GM12878 (cell line): ENCODE measurements at regions of chr11 and their contacts with region 1.

Region 1: DNA sequence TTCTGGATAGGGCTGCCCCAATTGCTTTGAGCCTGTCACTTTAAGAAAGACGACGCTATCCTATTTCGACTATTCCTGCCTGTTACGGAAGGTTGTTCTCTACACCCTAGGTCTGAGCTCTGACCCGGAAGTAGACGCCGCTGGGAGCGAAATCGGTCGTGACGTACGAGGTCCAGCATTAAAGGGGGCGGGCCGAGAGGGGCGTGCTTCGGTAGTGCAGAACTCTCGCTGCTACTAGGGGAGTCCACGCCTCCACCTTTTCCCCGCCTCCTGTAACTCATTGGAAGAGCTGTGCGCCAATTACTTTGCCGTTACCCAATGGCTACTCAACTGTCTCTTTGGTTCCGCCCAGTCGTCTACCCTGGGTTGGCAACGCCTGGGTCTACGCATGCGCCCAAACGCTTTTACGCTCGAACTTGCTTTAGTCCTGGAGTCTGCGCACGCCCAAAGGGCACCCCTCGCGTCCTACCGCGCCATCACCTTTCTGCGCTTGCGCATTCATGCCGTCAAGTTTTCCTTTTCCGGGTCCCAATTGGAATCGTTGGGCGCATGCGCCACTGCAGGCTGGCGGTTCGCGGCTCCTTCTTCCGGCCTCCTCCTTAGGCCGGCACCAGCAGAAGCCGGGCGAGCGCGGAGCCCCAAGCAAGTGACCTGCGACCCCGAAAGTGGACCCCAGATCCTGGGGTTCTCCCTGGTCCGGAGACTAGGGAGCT is at the start of gene PCNX3:
- DNase-seq: peak; percentile 100
- ATAC-seq: peak; percentile 86
- H3K4me3 ChIP-seq: peak within 1 kb of the TSS; percentile 100
- H3K27ac ChIP-seq: peak within 1 kb of the TSS; percentile 91
- H3K4me1 ChIP-seq: peaks cover 24% of the 10 kb centered on the region
- H3K27me3 ChIP-seq: no peaks in the 10 kb centered on the region
- CTCF ChIP-seq: no peak
- EP300 ChIP-seq: peak in 1 of 2 experiments; percentile 57; a peak in 2 of 4 replicates
- POLR2A ChIP-seq: peak; percentile 64
- RAD21 ChIP-seq: no peak
- polyA plus RNA-seq, gene PCNX3: 0.03 to 0.15 TPM

Region 2: DNA sequence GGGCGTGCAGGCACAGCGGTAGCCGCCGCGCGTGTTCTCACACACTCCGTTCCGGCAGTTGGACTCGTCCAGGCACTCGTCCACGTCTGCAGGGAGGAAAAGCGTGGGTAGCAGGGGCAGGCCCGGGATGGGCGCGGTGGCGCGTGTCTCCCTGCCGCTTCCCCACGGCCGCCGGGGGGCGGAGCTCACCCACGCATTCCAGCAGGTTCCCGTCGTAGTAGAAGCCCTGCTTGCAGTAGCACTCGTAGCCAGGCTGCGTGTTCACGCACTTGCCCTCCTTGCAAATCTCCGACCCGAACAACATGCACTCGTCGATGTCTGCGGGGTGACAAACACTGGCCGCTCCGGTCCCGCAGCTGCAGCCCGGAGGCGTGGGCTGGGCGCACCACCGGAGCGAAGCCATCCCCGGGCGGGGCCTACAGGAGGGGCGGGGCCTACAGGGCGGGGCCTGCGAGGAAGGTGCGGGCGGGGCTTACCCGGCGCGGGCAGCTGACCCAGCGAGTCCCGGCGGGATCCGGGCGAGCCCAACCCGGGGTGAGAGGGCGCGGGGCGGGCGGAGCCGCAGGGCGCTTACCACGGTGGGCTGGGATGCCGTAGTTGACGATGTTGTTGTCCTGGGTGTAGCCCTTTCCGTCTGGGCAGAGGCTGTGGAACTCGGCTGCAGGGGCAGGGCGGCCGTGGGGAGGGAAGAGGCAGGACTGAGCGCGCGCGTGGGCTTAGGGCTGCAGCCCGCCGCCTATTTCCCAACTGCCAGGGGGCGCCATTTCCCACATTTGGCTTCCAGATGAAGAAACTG is 74.9 kb before region 1 on chr11:
- CTCF ChIA-PET with region 1: interaction called, 11 read pairs
- POLR2A ChIA-PET with region 1: interaction called, 14 read pairs
- RAD21 ChIA-PET with region 1: interaction called, 12 read pairs
- SMC1A ChIA-PET with region 1: interaction called, 21 read pairs
- in situ Hi-C with region 1: no loop called
- intact Hi-C with region 1: loop called (anchors 2 kb)
- DNase-seq: peak; percentile 71
- ATAC-seq: peak; percentile 95
- H3K4me3 ChIP-seq: peak overlapping the region; percentile 72
- H3K27ac ChIP-seq: peak overlapping the region; percentile 61
- H3K4me1 ChIP-seq: peaks cover 6% of the 10 kb centered on the region
- H3K27me3 ChIP-seq: no peaks in the 10 kb centered on the region
- CTCF ChIP-seq: peak; percentile 82 to 91 (median 82)
- EP300 ChIP-seq: no peak
- POLR2A ChIP-seq: peak; percentile 81
- RAD21 ChIP-seq: peak; percentile 74

Region 3: GRCh38 chr11:65575568-65576231 is 39.7 kb before region 1 on chr11 and contains the start of gene EHBP1L1:
- CTCF ChIA-PET with region 1: interaction called, 25 read pairs
- POLR2A ChIA-PET with region 1: interaction called, 34 read pairs
- RAD21 ChIA-PET with region 1: interaction called, 36 read pairs
- SMC1A ChIA-PET with region 1: interaction called, 6 read pairs
- in situ Hi-C with region 1: no loop called
- intact Hi-C with region 1: loop called (anchors 1 kb)
- DNase-seq: peak; percentile 70
- ATAC-seq: peak; percentile 27
- H3K4me3 ChIP-seq: peak within 1 kb of the TSS; percentile 97
- H3K27ac ChIP-seq: peak within 1 kb of the TSS; percentile 96
- H3K4me1 ChIP-seq: peaks cover 35% of the 10 kb centered on the region
- H3K27me3 ChIP-seq: no peaks in the 10 kb centered on the region
- CTCF ChIP-seq: no peak
- EP300 ChIP-seq: peak in 1 of 2 experiments; percentile 52; a peak in 1 of 4 replicates
- POLR2A ChIP-seq: peak; percentile 76
- RAD21 ChIP-seq: no peak
- polyA plus RNA-seq, gene EHBP1L1: 0.06 to 0.09 TPM

Region 4: DNA sequence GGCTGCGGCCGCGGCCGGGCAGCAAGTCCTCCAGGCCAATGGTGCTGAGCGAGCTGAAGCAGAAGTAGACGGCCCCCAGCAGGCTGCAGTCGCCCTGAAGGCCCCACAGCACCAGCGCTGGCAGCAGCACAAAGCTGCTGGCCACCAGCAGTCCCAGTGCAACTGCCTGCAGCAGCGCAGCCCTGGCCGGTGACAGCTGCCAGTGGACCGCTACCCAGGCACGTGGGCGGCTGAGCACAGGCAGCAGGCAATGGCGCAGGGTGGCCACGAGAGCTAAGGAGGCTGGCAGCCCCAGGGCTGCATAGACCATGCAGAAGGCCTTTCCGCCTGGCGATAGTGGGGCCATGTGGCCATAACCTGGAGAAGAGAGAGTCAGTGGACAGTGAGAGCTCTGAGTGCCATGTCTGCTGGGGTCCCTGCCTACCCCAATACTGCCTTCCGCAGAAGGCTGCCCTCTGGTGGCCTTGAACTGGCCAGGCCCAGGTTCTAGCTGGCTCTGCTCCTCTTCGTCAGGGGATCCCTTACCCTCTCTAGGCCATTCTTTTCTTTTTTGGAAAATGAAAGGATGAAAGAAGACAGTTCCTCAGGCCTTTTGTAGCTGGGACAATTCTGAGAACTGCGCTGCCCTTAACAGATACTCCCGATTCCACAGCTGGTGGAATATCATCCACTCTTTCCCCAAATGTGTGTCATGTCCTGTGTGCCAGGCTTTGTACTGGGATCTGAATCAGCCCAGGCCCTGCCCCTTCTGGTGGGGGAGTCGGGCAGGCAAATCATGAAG is 21.7 kb before region 1 on chr11:
- CTCF ChIA-PET with region 1: interaction called, 35 read pairs
- POLR2A ChIA-PET with region 1: interaction called, 12 read pairs
- RAD21 ChIA-PET with region 1: interaction called, 17 read pairs
- SMC1A ChIA-PET with region 1: interaction called, 21 read pairs
- in situ Hi-C with region 1: no loop called
- intact Hi-C with region 1: loop called (anchors 1 kb)
- DNase-seq: no peak
- ATAC-seq: peak; percentile 68
- H3K4me3 ChIP-seq: no peak overlapping the region
- H3K27ac ChIP-seq: no peak overlapping the region
- H3K4me1 ChIP-seq: peaks cover 11% of the 10 kb centered on the region
- H3K27me3 ChIP-seq: no peaks in the 10 kb centered on the region
- CTCF ChIP-seq: peak; percentile 62 to 71 (median 63)
- EP300 ChIP-seq: no peak
- POLR2A ChIP-seq: peak; percentile 48
- RAD21 ChIP-seq: peak; percentile 44

Region 5: GRCh38 chr11:65637794-65638317 is 22.5 kb after region 1 on chr11 and contains the start of gene SIPA1:
- CTCF ChIA-PET with region 1: interaction called, 11 read pairs
- POLR2A ChIA-PET with region 1: interaction called, 41 read pairs
- RAD21 ChIA-PET with region 1: interaction called, 15 read pairs
- SMC1A ChIA-PET with region 1: interaction called, 13 read pairs
- in situ Hi-C with region 1: no loop called
- intact Hi-C with region 1: loop called (anchors 2 kb)
- DNase-seq: no peak
- ATAC-seq: peak; percentile 59
- H3K4me3 ChIP-seq: peak within 1 kb of the TSS; percentile 85
- H3K27ac ChIP-seq: peak within 1 kb of the TSS; percentile 89
- H3K4me1 ChIP-seq: peaks cover 34% of the 10 kb centered on the region
- H3K27me3 ChIP-seq: no peaks in the 10 kb centered on the region
- CTCF ChIP-seq: peak in 2 of 3 experiments; percentile 31 to 43; a peak in 4 of 6 replicates
- EP300 ChIP-seq: no peak
- POLR2A ChIP-seq: peak; percentile 81
- RAD21 ChIP-seq: no peak
- polyA plus RNA-seq, gene SIPA1: 1.0 to 5.5 TPM

Region 6: GRCh38 chr11:65859200-65859811 is 243.9 kb after region 1 on chr11:
- CTCF ChIA-PET with region 1: interaction called, 3 read pairs
- POLR2A ChIA-PET with region 1: interaction called, 15 read pairs
- RAD21 ChIA-PET with region 1: interaction called, 5 read pairs
- SMC1A ChIA-PET with region 1: no interaction called
- in situ Hi-C with region 1: no loop called
- intact Hi-C with region 1: no loop called
- DNase-seq: peak; percentile 90
- ATAC-seq: peak; percentile 78
- H3K4me3 ChIP-seq: peak overlapping the region; percentile 85
- H3K27ac ChIP-seq: peak overlapping the region; percentile 100
- H3K4me1 ChIP-seq: peaks cover 25% of the 10 kb centered on the region
- H3K27me3 ChIP-seq: no peaks in the 10 kb centered on the region
- CTCF ChIP-seq: no peak
- EP300 ChIP-seq: no peak
- POLR2A ChIP-seq: peak; percentile 87
- RAD21 ChIP-seq: no peak